Activated naive CD8-positive, alpha-beta T cell treated with anti-CD3 and anti-CD28 coated beads, Interleukin-2, amount 10 ng/mL, durations not matched to agents 7 days and 5 days (primary cell): ENCODE measurements at regions of chr3 and their contacts with region 1.

Region 1: GRCh38 chr3:9779721-9780457 is 10.1 kb upstream of the CAMK1 start:
- DNase-seq: peak; percentile 75
- ATAC-seq: peak; percentile 84
- H3K4me3 Mint-ChIP-seq: peak overlapping the region; percentile 67
- H3K27ac Mint-ChIP-seq: peak overlapping the region; percentile 94
- H3K4me1 Mint-ChIP-seq: peaks cover 63% of the 10 kb centered on the region
- H3K27me3 Mint-ChIP-seq: peaks cover 2% of the 10 kb centered on the region

Region 2: DNA sequence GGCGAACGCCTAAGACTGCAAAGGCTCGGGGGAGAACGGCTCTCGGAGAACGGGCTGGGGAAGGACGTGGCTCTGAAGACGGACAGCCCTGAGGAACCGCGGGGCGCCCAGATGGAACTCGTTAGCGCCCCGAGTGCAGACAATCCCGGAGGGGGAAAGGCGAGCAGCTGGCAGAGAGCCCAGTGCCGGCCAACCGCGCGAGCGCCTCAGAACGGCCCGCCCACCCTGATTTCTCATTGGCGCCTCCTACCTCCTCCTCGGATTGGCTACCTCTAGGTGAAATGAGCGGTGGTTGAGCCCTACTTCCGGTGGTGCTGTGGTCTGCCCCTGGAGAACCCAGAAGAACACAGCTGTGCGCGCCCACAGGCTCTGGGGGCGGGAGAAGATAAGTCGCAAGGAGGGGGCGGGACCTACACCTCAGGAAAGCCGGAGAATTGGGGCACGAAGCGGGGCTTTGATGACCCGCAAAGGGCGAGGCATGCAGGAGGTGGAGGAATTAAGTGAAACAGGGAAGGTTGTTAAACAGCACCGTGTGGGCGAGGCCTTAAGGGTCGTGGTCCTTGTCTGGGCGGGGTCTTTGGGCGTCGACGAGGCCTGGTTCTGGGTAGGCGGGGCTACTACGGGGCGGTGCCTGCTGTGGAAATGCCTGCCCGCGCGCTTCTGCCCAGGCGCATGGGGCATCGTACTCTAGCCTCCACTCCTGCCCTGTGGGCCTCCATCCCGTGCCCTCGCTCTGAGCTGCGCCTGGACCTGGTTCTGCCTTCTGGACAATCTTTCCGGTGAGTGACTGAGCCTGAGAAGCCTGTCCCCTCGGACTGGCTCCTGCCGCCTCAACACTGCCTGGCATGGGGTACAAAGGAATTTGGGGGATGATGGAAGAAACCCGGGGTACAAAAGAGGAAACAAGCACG is 30.0 kb before region 1 on chr3 and contains the start of gene OGG1:
- POLR2A ChIA-PET with region 1: interaction called, 13 read pairs
- DNase-seq: peak; percentile 96
- ATAC-seq: peak; percentile 91
- H3K4me3 Mint-ChIP-seq: peak within 1 kb of the TSS; percentile 98
- H3K27ac Mint-ChIP-seq: peak within 1 kb of the TSS; percentile 94
- H3K4me1 Mint-ChIP-seq: peaks cover 51% of the 10 kb centered on the region
- H3K27me3 Mint-ChIP-seq: no peaks in the 10 kb centered on the region
- total RNA-seq, gene OGG1: 41.3 to 46.1 TPM

Region 3: DNA sequence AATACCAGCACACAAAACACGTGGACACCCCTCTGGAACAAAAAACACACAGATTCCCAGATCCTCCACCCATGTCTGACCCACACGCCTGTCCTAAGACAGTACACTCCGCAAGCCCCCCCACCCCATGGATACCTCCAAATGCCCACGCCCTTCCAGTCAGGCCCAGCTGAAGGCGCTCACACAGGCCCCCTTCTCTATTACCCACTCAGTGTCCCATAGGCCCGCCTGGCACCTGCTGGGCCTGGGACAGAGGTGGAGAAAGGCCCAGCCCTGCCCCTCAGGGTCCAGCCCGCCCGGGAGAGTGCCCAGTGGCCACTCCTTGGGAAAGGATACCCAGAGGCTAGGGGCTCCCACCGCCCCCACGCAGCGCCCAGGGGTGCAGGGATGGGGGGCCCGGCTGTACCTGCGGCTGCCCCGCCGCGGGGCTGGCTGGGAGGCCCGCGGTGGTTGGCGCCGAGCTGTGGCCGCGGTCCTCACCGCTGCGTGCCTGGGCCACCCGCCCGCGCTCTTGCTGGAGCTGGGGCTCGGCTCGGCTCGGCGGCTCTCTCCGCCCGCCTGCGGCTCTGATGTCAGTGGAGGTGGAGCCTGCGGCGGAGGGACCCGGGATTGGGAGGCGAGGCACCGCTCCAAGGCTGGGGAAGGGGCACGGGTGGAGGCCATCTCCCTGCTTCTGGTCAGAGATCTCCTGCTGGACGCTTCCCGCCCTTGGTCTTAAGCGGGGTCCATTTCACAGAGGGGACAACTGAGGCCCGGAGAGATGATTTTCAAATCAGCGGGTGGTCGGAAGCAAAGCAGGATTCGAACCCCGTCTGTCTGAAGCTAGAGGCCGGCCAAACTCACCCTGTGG is 10.2 kb before region 1 on chr3 and contains the start of gene CAMK1:
- POLR2A ChIA-PET with region 1: interaction called, 32 read pairs
- DNase-seq: peak; percentile 81
- ATAC-seq: peak; percentile 96
- H3K4me3 Mint-ChIP-seq: peak within 1 kb of the TSS; percentile 77
- H3K27ac Mint-ChIP-seq: peak within 1 kb of the TSS; percentile 67
- H3K4me1 Mint-ChIP-seq: peaks cover 33% of the 10 kb centered on the region
- H3K27me3 Mint-ChIP-seq: no peaks in the 10 kb centered on the region
- total RNA-seq, gene CAMK1: 25.2 to 26.9 TPM

Region 4: DNA sequence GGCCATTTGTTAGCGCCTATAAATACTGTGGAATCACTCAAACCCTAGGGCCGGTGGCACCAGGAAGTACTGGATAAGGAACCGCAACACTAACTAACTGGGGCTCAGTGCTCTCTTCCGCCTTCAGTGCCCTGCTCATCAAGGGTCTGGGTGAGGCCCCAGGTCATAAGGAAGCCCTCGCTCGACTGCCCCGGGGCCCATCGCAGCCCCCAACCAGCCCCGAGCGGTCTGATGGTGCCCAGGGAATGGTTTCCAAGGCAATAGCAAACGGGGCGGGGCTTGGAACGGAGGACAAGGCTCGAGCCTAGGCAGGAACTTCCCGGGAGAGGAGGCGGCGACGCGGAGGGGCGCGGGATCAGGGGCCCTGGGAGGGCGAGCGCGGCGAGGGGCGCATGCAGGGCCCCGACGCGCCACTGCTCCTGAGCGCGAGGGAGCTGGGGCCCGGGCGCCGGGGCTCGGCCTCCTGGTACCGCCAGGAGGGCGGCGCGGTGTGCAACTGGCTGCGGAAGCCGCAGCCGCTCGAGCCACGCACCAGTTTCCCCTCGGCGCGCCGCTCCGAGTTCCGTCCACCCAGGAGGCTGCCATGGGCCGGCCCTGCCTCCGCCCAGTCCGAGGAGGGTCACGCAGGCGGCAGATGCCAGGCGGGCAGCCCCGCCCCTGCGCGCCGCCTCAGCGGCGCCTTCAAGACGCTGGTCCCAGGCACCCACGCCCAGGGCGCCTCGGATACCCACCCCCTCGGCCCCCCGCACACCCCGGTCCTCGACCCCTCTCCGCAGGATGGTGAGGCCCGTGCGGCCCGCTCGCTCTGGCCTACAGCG is 29.9 kb after region 1 on chr3 and contains the start of gene TTLL3:
- POLR2A ChIA-PET with region 1: interaction called, 11 read pairs
- DNase-seq: peak; percentile 73
- ATAC-seq: peak; percentile 71
- H3K4me3 Mint-ChIP-seq: peak within 1 kb of the TSS; percentile 88
- H3K27ac Mint-ChIP-seq: peak within 1 kb of the TSS; percentile 93
- H3K4me1 Mint-ChIP-seq: peaks cover 34% of the 10 kb centered on the region
- H3K27me3 Mint-ChIP-seq: no peaks in the 10 kb centered on the region
- total RNA-seq, gene TTLL3: 84.0 to 85.7 TPM